ENCODE measurements at regions of chr1 and their contacts with region 1.

Region 1: DNA sequence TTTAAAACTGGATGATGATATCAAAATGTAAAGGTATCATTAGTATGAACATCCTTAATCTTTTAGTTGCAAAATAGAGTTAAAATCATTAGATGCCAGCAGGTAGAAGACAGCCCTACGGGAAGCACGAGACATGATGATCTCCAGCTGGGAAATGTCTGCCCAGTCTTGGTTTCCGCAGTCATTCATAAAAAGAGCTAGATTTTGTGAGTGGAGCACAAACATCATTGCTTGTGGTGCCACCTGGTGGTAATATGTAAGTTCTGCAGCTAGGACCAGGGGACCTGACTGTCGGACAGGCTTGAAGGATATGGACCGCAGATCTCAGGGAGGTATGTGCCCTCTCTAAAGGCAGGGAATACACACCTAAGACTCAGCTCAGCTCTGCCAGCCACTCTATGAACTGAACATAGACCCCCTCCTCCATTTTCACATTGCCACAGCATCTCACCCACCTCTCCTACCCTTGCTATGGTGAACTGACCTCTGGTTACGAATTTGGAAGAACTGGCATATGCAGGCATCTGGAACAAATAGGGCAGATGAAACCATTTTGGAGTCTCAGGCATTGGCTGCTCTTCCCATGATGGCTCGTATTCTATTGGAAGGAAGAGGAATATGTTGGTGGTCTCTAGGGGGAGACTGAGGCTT is 9.2 kb downstream of the FCMR start:
- DNase-seq: no peak
- ATAC-seq: peak; percentile 54
- H3K4me3 Mint-ChIP-seq: peak overlapping the region; percentile 42
- H3K27ac Mint-ChIP-seq: no peak overlapping the region
- H3K4me1 Mint-ChIP-seq: peaks cover 93% of the 10 kb centered on the region
- H3K27me3 Mint-ChIP-seq: no peaks in the 10 kb centered on the region
- CTCF ChIP-seq: peak; percentile 72

Region 2: DNA sequence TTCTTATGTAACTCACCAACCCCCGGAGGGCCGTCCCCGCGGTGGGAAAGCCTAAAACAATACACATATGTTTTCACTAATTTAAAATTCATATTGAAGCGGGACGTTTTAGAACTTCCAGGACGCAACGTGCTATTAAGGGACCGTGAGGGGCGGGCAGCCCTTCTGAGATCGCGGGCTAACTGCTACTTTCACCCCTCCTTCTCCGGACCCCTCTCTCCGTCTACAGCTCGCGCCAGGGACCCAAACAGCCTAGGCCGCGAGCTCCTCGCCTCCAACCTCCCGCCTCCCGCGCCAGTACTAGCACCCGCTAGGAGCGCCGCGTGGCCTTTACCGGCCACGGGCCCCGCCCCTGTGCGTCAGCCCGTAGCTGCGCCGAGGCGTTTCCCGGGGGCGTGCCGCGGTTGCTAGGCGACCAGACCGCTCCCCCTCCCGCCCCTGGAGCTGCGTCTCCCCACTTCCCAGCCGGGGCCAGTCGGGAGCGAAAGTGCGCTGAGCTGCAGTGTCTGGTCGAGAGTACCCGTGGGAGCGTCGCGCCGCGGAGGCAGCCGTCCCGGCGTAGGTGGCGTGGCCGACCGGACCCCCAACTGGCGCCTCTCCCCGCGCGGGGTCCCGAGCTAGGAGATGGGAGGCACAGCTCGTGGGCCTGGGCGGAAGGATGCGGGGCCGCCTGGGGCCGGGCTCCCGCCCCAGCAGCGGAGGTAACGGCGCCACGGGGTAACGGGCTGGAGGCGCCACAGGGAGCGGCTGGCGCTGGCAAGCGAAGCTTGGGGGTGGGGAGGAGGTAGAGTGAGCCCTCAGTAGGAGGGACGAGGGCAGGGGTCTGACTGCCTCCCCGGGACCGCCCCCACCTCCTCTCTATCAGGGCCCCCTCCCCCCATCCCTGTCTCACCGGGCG is 277.2 kb before region 1 on chr1 and contains the start of gene DYRK3:
- CTCF ChIA-PET with region 1: interaction called, 18 read pairs
- POLR2A ChIA-PET with region 1: interaction called, 4 read pairs
- intact Hi-C with region 1: loop called (anchors 1 kb)
- DNase-seq: peak; percentile 86
- ATAC-seq: peak; percentile 91
- H3K4me3 Mint-ChIP-seq: peak within 1 kb of the TSS; percentile 89
- H3K27ac Mint-ChIP-seq: peak within 1 kb of the TSS; percentile 76
- H3K4me1 Mint-ChIP-seq: peaks cover 24% of the 10 kb centered on the region
- H3K27me3 Mint-ChIP-seq: peaks cover 2% of the 10 kb centered on the region
- CTCF ChIP-seq: no peak
- total RNA-seq, gene DYRK3: 0.33 and 0.37 TPM in 2 replicates

Region 3: GRCh38 chr1:206725109-206725963 is 187.2 kb before region 1 on chr1:
- CTCF ChIA-PET with region 1: interaction called, 60 read pairs
- POLR2A ChIA-PET with region 1: interaction called, 5 read pairs
- intact Hi-C with region 1: loop called (anchors 1 kb)
- DNase-seq: no peak
- ATAC-seq: peak; percentile 63
- H3K4me3 Mint-ChIP-seq: no peak overlapping the region
- H3K27ac Mint-ChIP-seq: peak overlapping the region; percentile 63
- H3K4me1 Mint-ChIP-seq: peaks cover 48% of the 10 kb centered on the region
- H3K27me3 Mint-ChIP-seq: no peaks in the 10 kb centered on the region
- CTCF ChIP-seq: no peak

Region 4: GRCh38 chr1:206808615-206809014 is 104.0 kb before region 1 on chr1:
- CTCF ChIA-PET with region 1: interaction called, 42 read pairs
- POLR2A ChIA-PET with region 1: interaction called, 8 read pairs
- intact Hi-C with region 1: loop called (anchors 1 kb)
- DNase-seq: no peak
- ATAC-seq: peak; percentile 94
- H3K4me3 Mint-ChIP-seq: no peak overlapping the region
- H3K27ac Mint-ChIP-seq: no peak overlapping the region
- H3K4me1 Mint-ChIP-seq: peaks cover 32% of the 10 kb centered on the region
- H3K27me3 Mint-ChIP-seq: no peaks in the 10 kb centered on the region
- CTCF ChIP-seq: no peak

Region 5: GRCh38 chr1:206865013-206865671 is 47.4 kb before region 1 on chr1 and contains the start of gene IL20:
- CTCF ChIA-PET with region 1: interaction called, 29 read pairs
- POLR2A ChIA-PET with region 1: no interaction called
- intact Hi-C with region 1: loop called (anchors 1 kb)
- DNase-seq: peak; percentile 72
- ATAC-seq: peak; percentile 90
- H3K4me3 Mint-ChIP-seq: no peak within 1 kb of the TSS
- H3K27ac Mint-ChIP-seq: no peak within 1 kb of the TSS
- H3K4me1 Mint-ChIP-seq: peaks cover 6% of the 10 kb centered on the region
- H3K27me3 Mint-ChIP-seq: peaks cover 26% of the 10 kb centered on the region
- CTCF ChIP-seq: peak; percentile 43
- total RNA-seq, gene IL20: not detected in 2 replicates

Region 6: DNA sequence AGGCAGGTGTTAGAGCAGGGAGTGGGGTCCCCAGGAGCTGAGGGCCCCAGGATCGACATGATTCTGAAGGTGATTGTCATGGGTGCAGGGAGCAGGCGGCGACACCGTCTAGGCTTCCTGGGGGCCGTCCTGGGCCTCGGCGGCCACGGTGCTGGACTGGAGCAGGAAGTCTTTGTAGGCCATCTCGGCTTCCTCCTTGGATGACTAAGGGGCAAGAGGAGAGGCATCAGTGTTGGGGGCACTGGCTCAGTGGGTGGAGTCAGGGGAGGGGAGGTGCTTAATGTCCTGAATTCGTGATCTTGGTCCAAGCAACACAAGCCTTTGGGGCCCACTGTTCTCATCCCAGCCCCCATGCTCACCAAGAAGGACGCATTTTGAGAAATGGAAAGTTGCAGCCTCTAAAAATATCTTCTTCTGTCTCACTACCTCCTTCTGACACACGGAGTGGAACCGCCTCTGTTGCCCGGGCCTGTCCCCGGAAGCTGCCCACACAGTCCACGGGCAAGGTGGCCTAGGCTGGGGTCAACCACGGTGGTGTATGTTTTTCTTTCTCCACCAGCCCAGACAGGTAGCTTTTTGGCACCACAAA is 17.7 kb after region 1 on chr1:
- CTCF ChIA-PET with region 1: interaction called, 383 read pairs
- POLR2A ChIA-PET with region 1: interaction called, 267 read pairs
- intact Hi-C with region 1: loop called (anchors 1 kb)
- DNase-seq: peak; percentile 72
- ATAC-seq: peak; percentile 83
- H3K4me3 Mint-ChIP-seq: peak overlapping the region; percentile 79
- H3K27ac Mint-ChIP-seq: peak overlapping the region; percentile 99
- H3K4me1 Mint-ChIP-seq: peaks cover 67% of the 10 kb centered on the region
- H3K27me3 Mint-ChIP-seq: no peaks in the 10 kb centered on the region
- CTCF ChIP-seq: no peak